ENCODE measurements at regions of chr10 and their contacts with region 1.

Region 1: DNA sequence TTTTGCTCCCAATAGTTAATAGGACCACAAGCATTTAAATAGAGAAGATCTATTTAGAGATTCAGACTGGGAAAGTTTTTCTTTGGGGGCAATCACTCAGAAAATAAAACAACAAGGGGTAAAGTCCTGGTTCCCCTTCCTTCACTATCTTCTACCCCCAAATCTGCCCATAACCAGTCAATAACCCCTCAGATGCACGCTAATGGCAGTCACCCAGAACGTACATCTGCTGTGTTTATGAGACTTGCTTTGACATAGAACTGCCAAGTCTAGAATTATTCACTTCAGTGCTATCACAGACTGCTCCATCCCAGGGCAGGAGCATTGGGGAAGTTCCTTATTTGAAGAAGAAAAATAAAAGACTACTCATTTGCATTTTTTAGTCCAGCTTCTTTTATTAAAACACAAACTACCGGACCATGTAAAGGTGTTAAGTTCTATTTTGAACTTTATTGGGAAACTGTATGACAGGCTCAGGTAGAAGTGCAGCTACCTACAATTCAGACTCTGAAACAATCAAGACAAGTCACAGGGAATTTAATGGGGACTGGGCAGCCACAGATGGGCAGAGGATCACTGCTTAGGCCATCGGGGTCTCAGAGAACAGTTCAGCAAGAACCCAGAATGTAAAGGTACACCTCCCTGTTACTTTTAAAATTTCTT is 38.4 kb downstream of the ANK3 start:
- DNase-seq: peak; percentile 82
- ATAC-seq: peak; percentile 94
- H3K4me3 ChIP-seq: peak overlapping the region in 3 of 5 experiments; percentile 8 to 27 (median 19)
- H3K4me3 Mint-ChIP-seq: peak overlapping the region; percentile 77
- H3K27ac ChIP-seq: peak overlapping the region; percentile 83 to 84
- H3K27ac Mint-ChIP-seq: peak overlapping the region; percentile 91
- H3K4me1 ChIP-seq: peaks cover 40 to 41% of the 10 kb centered on the region in 2 donors
- H3K4me1 Mint-ChIP-seq: peaks cover 51% of the 10 kb centered on the region
- H3K27me3 ChIP-seq: no peaks in the 10 kb centered on the region
- H3K27me3 Mint-ChIP-seq: no peaks in the 10 kb centered on the region
- CTCF ChIP-seq: no peak

Region 2: GRCh38 chr10:60282771-60283353 is 68.5 kb before region 1 on chr10:
- CTCF ChIA-PET with region 1: no interaction called
- POLR2A ChIA-PET with region 1: no interaction called
- intact Hi-C with region 1: loop called (anchors 5 kb)
- DNase-seq: peak; percentile 5
- ATAC-seq: peak; percentile 91
- H3K4me3 ChIP-seq: peak overlapping the region in 1 of 5 experiments; percentile 1
- H3K4me3 Mint-ChIP-seq: peak overlapping the region; percentile 50
- H3K27ac ChIP-seq: peak overlapping the region in 1 of 2 donors; percentile 52
- H3K27ac Mint-ChIP-seq: peak overlapping the region; percentile 71
- H3K4me1 ChIP-seq: peaks cover 3 to 22% of the 10 kb centered on the region in 2 donors
- H3K4me1 Mint-ChIP-seq: peaks cover 30% of the 10 kb centered on the region
- H3K27me3 ChIP-seq: no peaks in the 10 kb centered on the region
- H3K27me3 Mint-ChIP-seq: no peaks in the 10 kb centered on the region
- CTCF ChIP-seq: no peak

Region 3: GRCh38 chr10:60335708-60336107 is 15.6 kb before region 1 on chr10:
- CTCF ChIA-PET with region 1: interaction called, 18 read pairs
- POLR2A ChIA-PET with region 1: no interaction called
- intact Hi-C with region 1: no loop called
- DNase-seq: peak; percentile 13
- ATAC-seq: peak; percentile 41
- H3K4me3 ChIP-seq: no peak overlapping the region
- H3K4me3 Mint-ChIP-seq: no peak overlapping the region
- H3K27ac ChIP-seq: no peak overlapping the region
- H3K27ac Mint-ChIP-seq: no peak overlapping the region
- H3K4me1 ChIP-seq: no peaks in the 10 kb centered on the region
- H3K4me1 Mint-ChIP-seq: peaks cover 2% of the 10 kb centered on the region
- H3K27me3 ChIP-seq: no peaks in the 10 kb centered on the region
- H3K27me3 Mint-ChIP-seq: no peaks in the 10 kb centered on the region
- CTCF ChIP-seq: no peak

Region 4: DNA sequence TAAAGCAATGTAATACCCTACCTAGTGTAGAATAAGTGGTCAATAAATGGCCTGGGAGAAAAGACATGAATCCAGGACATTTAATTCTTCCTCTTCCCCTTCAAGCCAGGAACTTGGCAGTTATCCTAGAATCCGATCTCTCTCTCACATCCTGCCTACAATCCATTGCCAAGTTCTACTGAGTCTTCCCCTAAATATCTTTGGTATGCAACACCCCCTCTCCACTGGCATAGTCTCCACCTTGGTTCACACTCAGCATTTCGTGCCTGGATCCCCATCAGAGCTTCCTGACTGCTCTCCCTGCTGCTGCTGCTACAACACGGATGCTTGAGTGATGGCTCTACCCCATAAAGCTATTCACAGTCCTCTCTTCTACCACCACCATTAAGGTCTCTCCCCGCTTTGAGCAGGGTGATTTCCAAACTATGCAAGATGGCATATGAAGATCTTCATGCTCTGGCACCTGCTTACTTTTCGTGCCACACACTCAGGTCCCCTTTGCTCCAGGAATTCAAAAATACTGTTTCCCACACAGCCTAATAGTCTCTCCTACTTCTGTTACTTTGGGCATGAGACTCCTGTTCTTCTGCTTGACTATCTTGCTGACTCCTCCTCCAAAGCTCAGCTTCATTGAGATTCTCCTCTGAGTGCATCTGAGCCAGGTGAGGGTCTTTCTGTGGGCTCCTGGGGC is 33.5 kb after region 1 on chr10:
- CTCF ChIA-PET with region 1: no interaction called
- POLR2A ChIA-PET with region 1: no interaction called
- intact Hi-C with region 1: loop called (anchors 5 kb)
- DNase-seq: no peak
- ATAC-seq: no peak
- H3K4me3 ChIP-seq: no peak overlapping the region
- H3K4me3 Mint-ChIP-seq: no peak overlapping the region
- H3K27ac ChIP-seq: no peak overlapping the region
- H3K27ac Mint-ChIP-seq: no peak overlapping the region
- H3K4me1 ChIP-seq: peaks cover 22 to 25% of the 10 kb centered on the region in 2 donors
- H3K4me1 Mint-ChIP-seq: peaks cover 24% of the 10 kb centered on the region
- H3K27me3 ChIP-seq: no peaks in the 10 kb centered on the region
- H3K27me3 Mint-ChIP-seq: no peaks in the 10 kb centered on the region
- CTCF ChIP-seq: no peak

Region 5: GRCh38 chr10:60434418-60435046 is 83.2 kb after region 1 on chr10:
- CTCF ChIA-PET with region 1: interaction called, 4 read pairs
- POLR2A ChIA-PET with region 1: no interaction called
- intact Hi-C with region 1: loop called (anchors 5 kb)
- DNase-seq: peak; percentile 61
- ATAC-seq: peak; percentile 56
- H3K4me3 ChIP-seq: no peak overlapping the region
- H3K4me3 Mint-ChIP-seq: no peak overlapping the region
- H3K27ac ChIP-seq: no peak overlapping the region
- H3K27ac Mint-ChIP-seq: no peak overlapping the region
- H3K4me1 ChIP-seq: no peaks in the 10 kb centered on the region
- H3K4me1 Mint-ChIP-seq: peaks cover 7% of the 10 kb centered on the region
- H3K27me3 ChIP-seq: no peaks in the 10 kb centered on the region
- H3K27me3 Mint-ChIP-seq: no peaks in the 10 kb centered on the region
- CTCF ChIP-seq: peak; percentile 77

Region 6: GRCh38 chr10:60863796-60864195 is 512.5 kb after region 1 on chr10:
- CTCF ChIA-PET with region 1: no interaction called
- POLR2A ChIA-PET with region 1: no interaction called
- intact Hi-C with region 1: no loop called
- DNase-seq: no peak
- ATAC-seq: no peak
- H3K4me3 ChIP-seq: no peak overlapping the region
- H3K4me3 Mint-ChIP-seq: no peak overlapping the region
- H3K27ac ChIP-seq: no peak overlapping the region
- H3K27ac Mint-ChIP-seq: no peak overlapping the region
- H3K4me1 ChIP-seq: no peaks in the 10 kb centered on the region
- H3K4me1 Mint-ChIP-seq: no peaks in the 10 kb centered on the region
- H3K27me3 ChIP-seq: no peaks in the 10 kb centered on the region
- H3K27me3 Mint-ChIP-seq: peaks cover 7% of the 10 kb centered on the region
- CTCF ChIP-seq: no peak

Measured in B cell (primary cell).